ENCODE measurements at regions of chr13 and their contacts with region 1.

Region 1: DNA sequence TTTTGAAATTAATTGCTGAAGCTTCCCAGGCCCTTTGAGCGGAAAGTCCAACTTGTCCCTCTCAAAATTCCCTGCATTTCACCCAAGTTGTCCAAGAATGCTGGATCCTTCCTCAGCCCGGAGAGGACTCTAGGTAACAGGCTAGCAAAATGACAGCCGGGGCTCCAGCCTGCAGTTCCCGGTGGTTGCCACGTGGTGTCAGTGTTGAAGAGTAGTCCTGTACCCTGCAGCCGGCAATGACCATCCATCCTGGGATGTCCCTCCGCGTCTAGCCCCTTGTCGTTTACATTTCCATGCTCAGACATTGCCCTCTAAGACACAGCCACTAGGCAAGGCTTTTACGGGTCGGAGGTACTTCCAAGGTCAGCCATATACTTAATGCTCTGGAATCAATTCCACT is 31.4 kb upstream of the MTIF3 start:
- DNase-seq: peak; percentile 43
- H3K4me3 ChIP-seq: no peak overlapping the region
- H3K27ac ChIP-seq: no peak overlapping the region
- H3K4me1 ChIP-seq: peaks cover 21% of the 10 kb centered on the region
- CTCF ChIP-seq: peak; percentile 80

Region 2: DNA sequence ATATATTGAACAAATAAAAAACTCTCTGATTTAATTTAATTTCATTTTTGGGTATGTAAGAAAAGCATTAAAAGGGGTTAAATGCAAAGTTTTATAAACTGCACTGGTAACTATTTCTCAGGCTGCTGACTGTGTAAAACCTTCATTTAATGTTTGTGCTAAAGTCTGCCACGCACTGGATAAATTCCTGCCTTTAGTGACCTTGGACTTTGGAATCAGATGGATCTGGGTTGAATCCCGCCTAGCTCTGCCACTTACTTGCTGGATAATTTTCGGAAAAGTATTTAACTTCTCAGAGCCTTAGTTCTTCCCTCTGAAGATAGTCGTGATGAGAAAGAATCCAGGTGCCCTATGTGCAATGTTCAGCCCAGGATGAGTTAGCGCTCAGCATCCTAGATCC is 152.6 kb before region 1 on chr13:
- CTCF ChIA-PET with region 1: no interaction called
- POLR2A ChIA-PET with region 1: no interaction called
- intact Hi-C with region 1: no loop called
- DNase-seq: no peak
- H3K4me3 ChIP-seq: no peak overlapping the region
- H3K27ac ChIP-seq: no peak overlapping the region
- H3K4me1 ChIP-seq: peaks cover 5% of the 10 kb centered on the region
- CTCF ChIP-seq: no peak

Region 3: DNA sequence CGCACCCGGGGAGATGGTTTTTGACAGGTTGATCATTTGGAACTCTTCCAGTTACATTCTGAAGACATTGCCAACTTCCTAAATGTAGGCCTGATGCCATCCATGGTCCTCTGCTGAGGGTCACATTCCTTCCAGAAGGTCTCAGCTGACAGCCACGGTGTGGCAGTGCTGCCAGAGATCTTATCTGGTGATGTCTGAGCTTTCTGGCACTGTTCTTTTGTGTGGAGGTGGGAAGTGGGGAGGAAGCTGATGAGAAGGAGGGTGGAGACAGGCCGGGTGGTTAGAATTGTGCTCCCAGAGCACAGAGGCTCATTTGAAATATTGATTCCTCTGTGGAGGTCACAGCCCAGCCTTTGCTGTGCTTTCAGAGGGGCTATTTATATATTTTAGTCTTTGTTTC is 15.3 kb before region 1 on chr13:
- CTCF ChIA-PET with region 1: no interaction called
- POLR2A ChIA-PET with region 1: interaction called, 10 read pairs
- intact Hi-C with region 1: no loop called
- DNase-seq: no peak
- H3K4me3 ChIP-seq: no peak overlapping the region
- H3K27ac ChIP-seq: no peak overlapping the region
- H3K4me1 ChIP-seq: peaks cover 3% of the 10 kb centered on the region
- CTCF ChIP-seq: no peak

Region 4: DNA sequence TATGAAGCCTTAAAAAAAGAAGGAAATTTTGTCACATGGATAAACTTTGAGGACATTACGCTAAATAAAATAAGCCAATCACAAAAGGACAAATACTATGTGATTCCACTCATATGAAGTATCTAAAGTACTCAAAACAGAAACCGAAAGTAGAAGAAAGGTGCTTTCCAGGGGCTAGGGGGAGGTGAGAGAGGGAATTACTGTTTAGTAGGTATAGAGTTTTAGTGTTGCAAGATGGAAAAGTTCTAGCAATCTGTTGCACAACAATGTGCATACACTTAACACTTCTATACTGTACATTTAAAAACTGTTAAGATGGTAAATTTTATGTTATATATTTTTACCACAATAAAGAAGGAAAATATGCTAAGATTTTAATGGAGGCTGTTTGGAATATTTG is 222.9 kb after region 1 on chr13:
- CTCF ChIA-PET with region 1: no interaction called
- POLR2A ChIA-PET with region 1: no interaction called
- intact Hi-C with region 1: no loop called
- DNase-seq: no peak
- H3K4me3 ChIP-seq: no peak overlapping the region
- H3K27ac ChIP-seq: no peak overlapping the region
- H3K4me1 ChIP-seq: no peaks in the 10 kb centered on the region
- CTCF ChIP-seq: no peak